Activated CD4-positive, alpha-beta T cell treated with anti-CD3 and anti-CD28 coated beads for 36 hours (primary cell): ENCODE measurements at regions of chr9 and their contacts with region 1.

Region 1: DNA sequence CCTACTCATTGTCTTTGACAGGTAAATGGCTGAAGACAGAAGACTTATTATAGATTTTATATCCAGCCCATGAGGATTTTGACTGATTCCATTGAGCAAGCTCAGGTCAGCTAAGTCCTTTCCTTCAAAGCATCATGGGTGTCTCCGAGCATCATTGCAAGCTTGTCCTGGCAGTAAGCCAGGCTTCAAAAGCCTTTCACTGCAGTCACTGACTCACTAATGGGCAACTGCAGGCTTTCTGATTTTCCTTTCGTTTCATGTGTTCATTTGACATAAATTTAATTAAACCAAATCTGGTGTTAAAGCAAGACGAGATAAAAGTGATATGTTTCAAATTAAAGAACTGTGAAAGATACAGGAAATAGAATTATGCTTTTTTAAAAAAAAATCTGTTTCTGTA is 426.2 kb downstream of the ANXA1 start:
- DNase-seq: no peak
- ATAC-seq: no peak
- H3K4me3 Mint-ChIP-seq: no peak overlapping the region
- H3K27ac Mint-ChIP-seq: no peak overlapping the region
- H3K4me1 Mint-ChIP-seq: no peaks in the 10 kb centered on the region
- H3K27me3 Mint-ChIP-seq: no peaks in the 10 kb centered on the region

Region 2: DNA sequence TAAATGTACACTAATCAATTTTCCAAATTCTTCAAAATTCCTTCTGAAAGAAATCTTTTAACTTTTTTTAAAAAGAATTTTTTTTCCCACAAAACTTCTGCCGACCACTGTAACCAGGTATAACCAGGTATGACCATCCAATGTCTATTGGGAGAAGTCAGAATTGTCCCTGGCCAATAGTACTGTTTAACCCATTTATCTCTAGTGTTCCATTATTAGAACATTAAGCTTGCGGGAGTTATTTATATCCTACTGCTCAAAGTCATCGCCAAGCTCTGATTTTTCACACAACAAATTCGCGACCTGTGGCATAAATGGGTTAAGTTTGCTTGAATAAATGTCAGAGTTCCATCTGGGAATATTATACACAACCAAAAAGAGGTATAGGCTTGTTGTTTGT is 83.0 kb before region 1 on chr9:
- CTCF ChIA-PET with region 1: no interaction called
- POLR2A ChIA-PET with region 1: no interaction called
- intact Hi-C with region 1: no loop called
- DNase-seq: no peak
- ATAC-seq: no peak
- H3K4me3 Mint-ChIP-seq: no peak overlapping the region
- H3K27ac Mint-ChIP-seq: no peak overlapping the region
- H3K4me1 Mint-ChIP-seq: no peaks in the 10 kb centered on the region
- H3K27me3 Mint-ChIP-seq: no peaks in the 10 kb centered on the region

Region 3: GRCh38 chr9:75389101-75389500 is 1811.3 kb after region 1 on chr9:
- CTCF ChIA-PET with region 1: no interaction called
- POLR2A ChIA-PET with region 1: no interaction called
- intact Hi-C with region 1: loop called in 1 of 2 experiments (anchors 10 kb)
- DNase-seq: no peak
- ATAC-seq: no peak
- H3K4me3 Mint-ChIP-seq: no peak overlapping the region
- H3K27ac Mint-ChIP-seq: no peak overlapping the region
- H3K4me1 Mint-ChIP-seq: no peaks in the 10 kb centered on the region
- H3K27me3 Mint-ChIP-seq: no peaks in the 10 kb centered on the region